Posterior cingulate gyrus (tissue), 11 donors: ENCODE measurements at regions of chr1 and their contacts with region 1.

Region 1: DNA sequence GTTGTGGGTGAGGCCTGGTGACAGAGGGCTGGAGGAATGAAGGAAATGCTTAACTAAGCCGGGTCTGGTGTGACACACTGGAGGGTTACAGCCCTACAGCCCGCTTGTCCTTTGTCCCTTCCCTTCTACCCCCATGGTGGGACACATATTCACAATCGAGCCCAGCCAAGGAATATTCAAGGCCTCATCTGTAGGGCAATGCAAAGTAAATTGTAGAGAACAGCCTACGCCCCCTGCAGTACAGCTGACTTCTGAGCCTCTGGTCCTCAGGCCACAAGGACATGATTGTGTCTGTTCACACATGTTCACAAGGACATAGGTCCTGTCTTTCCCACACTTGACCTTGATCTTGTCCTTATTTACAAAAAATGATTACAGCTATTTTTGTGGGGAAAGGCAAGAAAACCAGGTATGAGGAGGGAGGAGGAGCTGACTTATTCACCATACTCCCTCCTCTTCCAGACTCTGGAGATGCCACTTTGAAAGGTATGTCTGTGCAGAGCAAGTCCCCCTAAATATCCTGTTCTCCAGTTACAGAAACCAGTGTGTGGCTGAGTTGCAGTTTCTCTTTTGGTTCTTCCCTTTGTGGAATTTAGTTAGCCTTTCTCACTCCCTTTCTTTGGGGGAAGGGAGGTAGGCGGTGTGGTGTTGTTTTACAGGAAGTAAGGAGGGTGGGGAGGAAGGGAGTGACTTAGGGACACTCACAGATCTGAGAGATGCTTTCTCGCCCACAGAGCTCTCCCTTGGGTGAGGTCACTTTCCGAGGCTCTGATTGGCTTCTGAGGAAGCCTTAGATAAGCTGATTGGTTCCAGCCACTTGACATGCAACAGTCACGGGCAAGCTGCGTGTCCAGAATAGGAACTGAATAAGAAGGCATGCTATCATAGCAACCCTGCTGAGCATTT is 14.6 kb downstream of the POLR3GL start:
- DNase-seq: peak; percentile 78 to 98 (median 88)

Region 2: DNA sequence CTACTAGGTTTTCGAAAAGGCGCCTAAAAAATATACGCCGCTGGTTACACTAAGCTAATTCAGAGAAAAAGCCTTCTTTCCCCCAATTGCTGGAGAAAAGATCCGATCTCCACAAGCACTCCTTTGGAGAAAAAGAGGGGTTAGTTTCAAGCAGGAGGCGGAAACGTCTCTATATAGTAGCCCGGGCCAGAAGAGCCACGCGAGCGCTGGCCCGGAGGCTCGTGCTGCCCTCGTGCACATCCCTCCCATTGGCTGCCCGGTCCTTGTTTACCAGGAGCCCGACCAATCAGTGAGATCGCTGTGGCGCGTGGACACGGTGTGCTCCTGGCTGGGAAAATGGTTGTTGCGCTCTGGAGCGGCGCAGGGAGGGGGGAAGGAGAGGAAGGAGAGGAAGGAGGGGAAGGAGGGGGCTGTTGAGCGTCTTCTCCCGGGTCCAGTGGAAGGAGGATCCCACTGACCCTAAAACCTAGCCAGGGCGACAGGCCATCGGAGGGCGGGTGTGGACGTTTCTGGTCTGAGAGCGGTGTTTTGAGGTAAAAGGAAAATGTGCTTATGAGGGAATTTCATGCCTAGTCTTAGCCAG is 17.4 kb after region 1 on chr1 and contains the start of gene TXNIP:
- intact Hi-C with region 1: loop called (anchors 1 kb)
- DNase-seq: peak; percentile 98 to 100 (median 100)

Region 3: GRCh38 chr1:146007506-146008133 is 28.5 kb after region 1 on chr1:
- intact Hi-C with region 1: loop called (anchors 1 kb)
- DNase-seq: no peak

Region 4: GRCh38 chr1:146012737-146013403 is 33.8 kb after region 1 on chr1:
- intact Hi-C with region 1: loop called (anchors 1 kb)
- DNase-seq: peak in 2 of 10 donors; percentile 40 to 51